Activated B cell treated with CpG ODN at 0.5 μM for 24 hours (primary cell): ENCODE measurements at regions of chr6 and their contacts with region 1.

Region 1: DNA sequence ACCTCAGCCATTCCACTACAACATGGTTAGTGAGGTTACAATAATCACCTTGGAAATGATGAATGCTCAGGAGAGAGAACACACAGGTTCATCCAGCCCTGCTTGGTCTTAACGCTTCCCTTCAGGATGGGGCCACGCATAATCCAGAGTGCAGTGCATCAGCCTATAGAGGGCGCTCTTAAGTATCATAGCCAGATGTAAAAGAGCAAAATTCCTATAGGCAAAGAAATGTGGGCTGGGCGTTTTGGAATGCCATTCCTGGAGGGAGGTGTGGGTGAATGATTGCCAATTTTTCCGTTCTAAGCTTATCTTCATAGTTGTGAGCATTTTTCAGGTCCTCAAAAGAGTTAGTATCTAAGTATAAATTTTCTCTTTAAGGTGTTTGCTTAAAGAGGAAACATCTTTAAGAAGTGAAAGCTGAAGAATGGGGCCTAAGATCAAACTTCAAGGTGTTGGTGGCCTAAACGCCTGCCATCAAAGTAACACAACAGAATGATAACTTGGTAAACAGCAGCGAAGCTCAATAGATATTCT is 1.8 kb downstream of the RIPOR2 start:
- DNase-seq: no peak
- ATAC-seq: no peak
- H3K4me3 Mint-ChIP-seq: peak overlapping the region; percentile 91
- H3K27ac Mint-ChIP-seq: peak overlapping the region; percentile 91
- H3K4me1 Mint-ChIP-seq: peaks cover 97% of the 10 kb centered on the region
- H3K27me3 Mint-ChIP-seq: no peaks in the 10 kb centered on the region
- CTCF ChIP-seq: peak; percentile 32

Region 2: GRCh38 chr6:24891004-24891403 is 42.9 kb before region 1 on chr6:
- CTCF ChIA-PET with region 1: interaction called, 12 read pairs
- POLR2A ChIA-PET with region 1: interaction called, 15 read pairs
- intact Hi-C with region 1: loop called (anchors 2 kb)
- DNase-seq: no peak
- ATAC-seq: peak; percentile 49
- H3K4me3 Mint-ChIP-seq: peak overlapping the region; percentile 13
- H3K27ac Mint-ChIP-seq: peak overlapping the region; percentile 80
- H3K4me1 Mint-ChIP-seq: peaks cover 90% of the 10 kb centered on the region
- H3K27me3 Mint-ChIP-seq: no peaks in the 10 kb centered on the region
- CTCF ChIP-seq: no peak

Region 3: DNA sequence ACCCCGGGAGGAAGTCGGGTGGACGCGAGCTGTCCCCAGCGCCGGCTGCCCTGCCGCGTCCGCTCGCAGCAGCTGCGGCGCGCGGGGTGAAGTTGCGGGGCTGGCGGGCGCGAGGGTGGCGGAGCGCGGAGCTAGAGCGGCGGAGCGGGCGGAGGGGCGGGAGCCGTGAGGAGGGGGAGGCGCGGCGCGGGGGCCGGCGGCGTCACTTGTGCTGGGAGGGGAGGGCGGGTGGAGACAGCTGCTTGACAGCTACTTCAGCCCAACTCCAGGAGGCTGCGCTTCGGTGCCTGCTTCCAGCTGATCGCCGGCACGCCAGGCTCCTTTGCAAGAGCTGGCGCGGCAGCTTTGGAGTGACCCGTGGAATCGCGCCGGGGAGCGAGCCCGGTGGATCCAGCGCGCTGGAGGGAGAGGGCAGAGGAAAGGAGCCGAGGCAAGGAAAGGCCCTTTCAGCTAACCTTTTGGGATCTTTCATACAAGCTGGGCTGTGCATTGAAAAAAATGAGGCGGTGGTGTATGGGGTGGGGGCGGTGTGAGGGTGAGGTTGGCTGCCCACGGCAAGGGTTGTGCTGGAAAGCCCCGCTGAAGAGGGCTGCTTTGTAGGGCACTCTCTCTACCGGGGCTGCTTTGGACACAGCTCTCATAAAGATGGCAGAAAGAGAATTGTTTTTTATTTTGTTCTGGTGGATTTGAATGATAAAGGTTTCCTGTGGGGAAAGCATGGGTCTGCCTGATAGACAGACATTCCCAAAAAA is 22.8 kb before region 1 on chr6:
- CTCF ChIA-PET with region 1: interaction called, 56 read pairs
- POLR2A ChIA-PET with region 1: interaction called, 111 read pairs
- intact Hi-C with region 1: loop called (anchors 1 kb)
- DNase-seq: no peak
- ATAC-seq: peak; percentile 49
- H3K4me3 Mint-ChIP-seq: peak overlapping the region; percentile 91
- H3K27ac Mint-ChIP-seq: peak overlapping the region; percentile 95
- H3K4me1 Mint-ChIP-seq: peaks cover 98% of the 10 kb centered on the region
- H3K27me3 Mint-ChIP-seq: no peaks in the 10 kb centered on the region
- CTCF ChIP-seq: no peak

Region 4: DNA sequence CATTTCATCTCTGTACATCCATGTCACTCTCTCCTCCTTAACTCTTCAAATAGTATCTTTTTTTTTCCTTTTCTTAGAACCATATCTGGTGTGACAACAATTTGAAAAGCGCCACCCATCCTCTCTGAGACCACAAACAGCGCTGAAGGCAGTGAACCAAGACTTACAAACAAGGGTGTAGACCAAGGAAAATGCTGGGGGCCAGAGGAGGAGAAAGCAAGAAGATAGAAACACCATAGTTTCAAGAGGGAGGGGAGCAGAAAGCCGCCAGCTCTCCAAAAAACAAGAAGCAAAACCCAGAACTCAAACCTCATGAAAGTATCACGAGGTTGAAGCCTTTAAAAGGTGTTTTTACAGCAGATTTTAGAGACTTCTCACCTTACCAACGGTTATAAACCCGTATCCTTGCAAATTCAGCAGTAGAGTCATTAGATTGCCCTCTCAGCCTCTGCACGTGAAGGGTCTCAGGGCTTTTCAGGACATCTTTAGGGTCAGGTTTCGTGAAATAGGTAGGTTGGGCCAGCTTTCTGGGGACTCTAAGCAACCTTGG is 15.2 kb after region 1 on chr6:
- CTCF ChIA-PET with region 1: interaction called, 25 read pairs
- POLR2A ChIA-PET with region 1: interaction called, 135 read pairs
- intact Hi-C with region 1: loop called (anchors 1 kb)
- DNase-seq: no peak
- ATAC-seq: peak; percentile 80
- H3K4me3 Mint-ChIP-seq: peak overlapping the region; percentile 65
- H3K27ac Mint-ChIP-seq: peak overlapping the region; percentile 94
- H3K4me1 Mint-ChIP-seq: peaks cover 85% of the 10 kb centered on the region
- H3K27me3 Mint-ChIP-seq: no peaks in the 10 kb centered on the region
- CTCF ChIP-seq: no peak

Region 5: DNA sequence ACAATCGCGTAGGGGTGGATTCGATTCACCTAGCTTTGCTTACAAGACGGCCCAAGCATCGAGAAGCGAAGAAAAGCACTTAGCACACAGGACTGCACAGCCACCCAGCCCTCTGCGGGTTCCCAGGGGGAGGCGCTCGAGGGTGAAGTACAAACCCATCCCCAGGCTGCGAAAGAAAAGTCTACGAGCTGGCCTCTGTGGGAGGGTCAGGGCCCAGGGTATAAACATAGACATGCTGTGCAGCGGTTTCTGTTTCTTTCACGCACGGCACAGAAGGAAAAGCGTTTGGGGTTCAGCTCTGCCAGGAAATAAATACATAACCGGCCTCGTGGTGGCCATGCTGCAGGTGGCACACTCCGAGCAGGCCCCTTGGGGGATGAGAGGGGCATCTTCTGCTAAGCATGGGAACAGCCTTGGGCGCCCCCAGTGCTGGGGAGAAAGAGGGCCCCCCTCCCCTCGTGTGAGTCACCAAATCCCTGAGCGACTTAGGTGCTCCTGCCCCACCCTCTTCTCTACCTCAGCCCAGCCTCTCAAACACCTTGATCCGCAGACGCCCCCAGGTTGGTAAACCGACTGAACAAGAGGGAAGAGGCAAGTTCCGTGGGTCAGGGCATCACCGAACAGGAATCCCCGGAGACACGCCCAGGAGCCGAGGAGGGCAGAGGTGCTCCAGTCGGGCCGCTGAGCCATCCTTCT is 93.4 kb after region 1 on chr6:
- CTCF ChIA-PET with region 1: interaction called, 13 read pairs
- POLR2A ChIA-PET with region 1: interaction called, 8 read pairs
- intact Hi-C with region 1: no loop called
- DNase-seq: peak; percentile 59
- ATAC-seq: peak; percentile 90
- H3K4me3 Mint-ChIP-seq: peak overlapping the region; percentile 77
- H3K27ac Mint-ChIP-seq: peak overlapping the region; percentile 83
- H3K4me1 Mint-ChIP-seq: peaks cover 58% of the 10 kb centered on the region
- H3K27me3 Mint-ChIP-seq: no peaks in the 10 kb centered on the region
- CTCF ChIP-seq: no peak

Region 6: DNA sequence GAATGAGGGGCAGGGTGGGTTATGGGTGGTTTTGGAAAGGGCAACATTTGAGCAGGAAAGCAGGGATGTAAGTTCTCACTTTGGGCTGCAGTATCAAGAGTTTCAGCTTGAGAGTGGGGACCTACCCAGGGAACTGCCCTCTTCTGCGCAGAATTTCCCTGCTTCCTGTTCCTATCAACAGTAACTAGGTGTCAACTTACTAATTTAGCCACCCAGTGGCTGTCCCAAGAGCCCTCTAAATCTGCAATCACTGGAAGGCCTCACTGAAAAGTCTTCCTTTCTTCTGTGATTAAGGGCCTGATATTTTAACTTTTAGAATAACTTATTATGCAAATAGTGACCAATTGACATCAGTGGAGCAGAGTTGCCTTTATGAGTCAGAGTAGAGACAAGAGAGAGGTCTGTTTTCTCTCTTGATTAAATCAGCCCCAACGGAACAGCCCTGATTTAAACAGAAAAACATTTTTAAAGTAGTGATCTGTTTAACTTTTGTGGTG is 120.0 kb after region 1 on chr6:
- CTCF ChIA-PET with region 1: no interaction called
- POLR2A ChIA-PET with region 1: interaction called, 3 read pairs
- intact Hi-C with region 1: loop called (anchors 1 kb)
- DNase-seq: no peak
- ATAC-seq: peak; percentile 76
- H3K4me3 Mint-ChIP-seq: peak overlapping the region; percentile 75
- H3K27ac Mint-ChIP-seq: peak overlapping the region; percentile 96
- H3K4me1 Mint-ChIP-seq: peaks cover 96% of the 10 kb centered on the region
- H3K27me3 Mint-ChIP-seq: no peaks in the 10 kb centered on the region
- CTCF ChIP-seq: no peak

Region 7: GRCh38 chr6:25138237-25139125 is 204.5 kb after region 1 on chr6:
- CTCF ChIA-PET with region 1: no interaction called
- POLR2A ChIA-PET with region 1: interaction called, 3 read pairs
- intact Hi-C with region 1: loop called (anchors 5 kb)
- DNase-seq: peak; percentile 35
- ATAC-seq: peak; percentile 94
- H3K4me3 Mint-ChIP-seq: peak overlapping the region; percentile 87
- H3K27ac Mint-ChIP-seq: peak overlapping the region; percentile 98
- H3K4me1 Mint-ChIP-seq: peaks cover 36% of the 10 kb centered on the region
- H3K27me3 Mint-ChIP-seq: no peaks in the 10 kb centered on the region
- CTCF ChIP-seq: no peak